Activated CD4-positive, alpha-beta T cell treated with anti-CD3 and anti-CD28 coated beads for 36 hours (primary cell): ENCODE measurements at regions of chr16 and their contacts with region 1.

Region 1: DNA sequence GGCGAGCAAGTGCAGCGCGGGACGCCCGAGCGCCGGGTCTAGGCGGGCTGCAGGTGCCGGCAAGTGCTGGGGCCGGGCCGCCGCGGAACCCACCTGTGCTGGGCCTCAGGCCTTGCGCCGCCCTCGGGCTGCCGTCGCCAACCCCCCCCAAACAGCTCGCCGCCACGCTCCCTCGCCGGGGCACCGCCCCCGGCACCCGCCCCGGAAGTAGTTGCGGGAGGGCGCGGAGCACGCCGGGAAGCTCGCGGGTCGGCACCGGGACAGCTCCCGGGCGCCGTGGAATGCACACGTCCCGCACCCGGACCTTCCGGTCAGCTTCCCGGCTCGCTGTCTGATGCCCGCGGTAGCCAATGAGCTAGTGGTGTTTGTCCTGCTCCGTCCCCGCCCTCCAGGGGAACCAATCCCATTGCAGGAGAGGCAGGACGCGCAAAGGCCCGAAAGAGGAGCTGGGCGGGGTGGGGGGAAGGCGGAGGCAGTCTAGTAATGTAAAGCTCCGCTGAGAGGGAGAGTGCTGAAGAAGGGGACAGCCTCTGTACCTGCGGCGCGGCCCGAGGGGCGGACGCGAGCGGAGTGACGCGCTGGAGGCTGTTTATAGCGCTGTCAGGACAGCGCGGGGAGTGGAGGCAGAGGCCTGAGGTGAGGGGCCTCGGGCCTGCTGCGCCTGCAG is at the starts of genes ANKS3 and DNAAF8:
- DNase-seq: peak; percentile 88
- ATAC-seq: peak; percentile 82
- H3K4me3 Mint-ChIP-seq: peak within 1 kb of the TSS; percentile 86
- H3K27ac Mint-ChIP-seq: peak within 1 kb of the TSS; percentile 58
- H3K4me1 Mint-ChIP-seq: peaks cover 13% of the 10 kb centered on the region
- H3K27me3 Mint-ChIP-seq: no peaks in the 10 kb centered on the region
- total RNA-seq, gene ANKS3: 12.1 to 14.1 TPM
- total RNA-seq, gene DNAAF8: 0.11 to 0.16 TPM

Region 2: DNA sequence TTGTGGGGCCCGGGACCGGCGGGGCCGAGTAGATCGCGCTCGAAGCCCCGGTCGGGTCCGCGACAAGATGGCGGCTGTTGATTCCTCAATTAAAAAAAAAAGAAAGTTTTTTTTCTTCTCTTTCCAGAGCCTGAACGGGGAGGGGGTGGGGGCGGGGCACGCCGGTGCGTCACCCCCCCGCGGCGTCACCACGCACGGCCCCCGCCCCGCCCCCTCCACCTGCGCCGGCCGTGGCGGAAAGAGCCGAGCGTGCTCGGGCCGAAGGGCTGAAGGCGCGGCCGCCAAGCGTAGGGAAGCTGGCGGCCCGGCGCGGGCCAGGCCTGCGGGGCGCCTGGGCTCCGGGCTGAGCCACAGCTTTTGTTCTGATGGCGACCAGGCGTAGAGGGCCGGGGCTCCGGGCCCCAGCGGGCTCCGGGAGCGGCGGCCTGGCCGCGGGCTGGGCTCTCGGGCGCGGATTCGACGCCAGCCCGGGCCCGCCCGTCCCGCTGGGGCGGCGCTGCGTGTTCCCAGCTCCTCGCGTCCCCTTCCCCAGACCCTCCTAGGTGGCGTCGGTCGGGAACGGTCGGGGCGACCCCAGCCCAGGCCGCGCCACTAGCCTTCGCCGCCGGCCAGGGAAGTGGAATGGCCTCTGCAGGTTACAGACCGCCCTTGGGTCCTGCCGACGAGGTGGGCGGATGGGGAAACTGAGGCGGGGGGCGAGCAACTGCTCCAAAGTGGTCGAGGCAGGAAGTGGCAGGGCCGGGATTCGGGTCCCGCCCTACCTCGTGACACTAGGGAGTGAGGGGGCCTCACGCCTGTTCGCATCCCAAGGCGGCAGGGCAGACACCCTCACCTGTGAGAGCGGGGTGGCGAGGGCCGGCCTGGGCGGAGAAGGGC is 853.3 kb before region 1 on chr16 and contains the start of gene CREBBP:
- CTCF ChIA-PET with region 1: no interaction called
- POLR2A ChIA-PET with region 1: no interaction called
- intact Hi-C with region 1: loop called in 1 of 2 experiments (anchors 1 kb)
- DNase-seq: peak; percentile 93
- ATAC-seq: peak; percentile 89
- H3K4me3 Mint-ChIP-seq: peak within 1 kb of the TSS; percentile 79
- H3K27ac Mint-ChIP-seq: peak within 1 kb of the TSS; percentile 69
- H3K4me1 Mint-ChIP-seq: peaks cover 36% of the 10 kb centered on the region
- H3K27me3 Mint-ChIP-seq: peaks cover 6% of the 10 kb centered on the region
- total RNA-seq, gene CREBBP: 28.1 to 37.4 TPM

Region 3: DNA sequence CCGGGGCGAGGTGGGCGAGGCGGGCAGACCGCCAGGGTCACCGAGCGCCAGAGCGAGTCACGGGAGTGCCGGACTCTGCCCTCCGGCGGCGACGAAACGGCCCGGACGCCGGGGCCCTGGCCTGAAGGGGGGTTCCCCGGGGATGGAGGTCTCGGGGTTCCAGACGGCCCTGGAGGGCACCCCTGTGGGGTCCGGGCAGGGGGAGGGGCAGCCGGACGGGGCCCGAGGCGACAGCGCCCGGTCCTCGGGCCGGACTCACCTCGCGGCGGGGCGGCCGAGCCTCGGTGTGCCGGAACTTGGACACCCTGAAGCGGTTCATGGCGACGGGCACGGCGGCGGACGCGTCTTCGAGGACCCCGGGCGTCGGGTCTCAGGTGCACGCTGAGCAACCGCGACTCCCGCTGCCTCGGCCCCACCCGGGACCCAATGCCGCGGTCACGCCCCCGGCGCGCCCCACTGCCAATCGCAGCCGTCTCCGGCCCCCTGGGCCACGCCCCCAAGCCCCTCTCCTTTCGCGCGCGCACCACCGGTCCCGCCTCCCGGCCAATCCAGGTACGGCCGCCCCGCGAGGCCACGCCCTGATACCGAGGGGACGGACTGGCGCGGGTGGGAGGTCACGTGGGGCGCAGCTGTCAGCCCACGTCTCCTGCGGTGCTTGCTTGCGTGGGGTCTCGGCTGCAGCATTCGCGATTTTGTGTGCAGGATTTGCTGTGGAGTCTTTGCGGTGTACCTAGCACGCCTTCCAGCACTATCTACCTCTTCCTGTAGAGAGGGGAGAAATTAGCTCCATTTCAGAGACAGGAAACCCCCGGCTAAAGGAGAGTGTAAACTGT is 317.8 kb before region 1 on chr16 and contains the start of gene CORO7:
- CTCF ChIA-PET with region 1: no interaction called
- POLR2A ChIA-PET with region 1: interaction called, 5 read pairs
- intact Hi-C with region 1: loop called in 1 of 2 experiments (anchors 2 kb)
- DNase-seq: peak; percentile 98
- ATAC-seq: peak; percentile 81
- H3K4me3 Mint-ChIP-seq: peak within 1 kb of the TSS; percentile 86
- H3K27ac Mint-ChIP-seq: peak within 1 kb of the TSS; percentile 84
- H3K4me1 Mint-ChIP-seq: peaks cover 29% of the 10 kb centered on the region
- H3K27me3 Mint-ChIP-seq: no peaks in the 10 kb centered on the region
- total RNA-seq, gene CORO7: 65.0 to 67.1 TPM

Region 4: DNA sequence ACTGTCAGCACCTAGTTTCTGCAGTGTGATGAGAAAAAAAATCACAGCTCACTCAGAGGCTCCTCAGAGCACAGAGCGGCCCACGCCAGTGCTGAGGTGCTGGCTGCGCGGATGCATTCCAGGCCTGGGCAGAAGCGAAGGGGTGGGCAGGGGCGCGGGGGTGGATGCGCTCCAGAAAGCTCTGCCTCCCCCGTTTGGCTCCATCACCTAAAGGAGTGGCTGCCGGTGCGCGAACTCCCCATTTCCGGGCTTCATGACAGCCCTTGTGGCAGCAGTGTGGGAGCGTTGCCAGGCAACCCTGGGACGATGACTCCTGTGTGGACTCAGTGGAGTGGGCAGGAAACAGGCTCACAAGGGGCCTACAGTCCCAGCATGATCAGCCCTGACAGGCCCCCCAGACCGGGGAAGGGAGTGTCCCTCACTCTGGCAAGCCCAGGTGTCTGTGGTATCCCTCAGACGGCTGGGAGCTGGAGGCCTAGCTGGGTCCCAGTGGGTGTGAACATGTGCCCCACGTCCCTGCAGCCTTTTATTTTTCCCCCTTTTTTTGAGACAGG is 73.7 kb before region 1 on chr16:
- CTCF ChIA-PET with region 1: no interaction called
- POLR2A ChIA-PET with region 1: no interaction called
- intact Hi-C with region 1: loop called in 1 of 2 experiments (anchors 2 kb)
- DNase-seq: peak; percentile 94
- ATAC-seq: peak; percentile 82
- H3K4me3 Mint-ChIP-seq: no peak overlapping the region
- H3K27ac Mint-ChIP-seq: peak overlapping the region; percentile 68
- H3K4me1 Mint-ChIP-seq: peaks cover 70% of the 10 kb centered on the region
- H3K27me3 Mint-ChIP-seq: no peaks in the 10 kb centered on the region

Region 5: GRCh38 chr16:4766874-4767628 is 32.9 kb after region 1 on chr16 and contains the start of gene ZNF500:
- CTCF ChIA-PET with region 1: interaction called, 5 read pairs
- POLR2A ChIA-PET with region 1: interaction called, 4 read pairs
- intact Hi-C with region 1: loop called (anchors 1 kb)
- DNase-seq: peak; percentile 97
- ATAC-seq: peak; percentile 78
- H3K4me3 Mint-ChIP-seq: peak within 1 kb of the TSS; percentile 89
- H3K27ac Mint-ChIP-seq: peak within 1 kb of the TSS; percentile 91
- H3K4me1 Mint-ChIP-seq: peaks cover 25% of the 10 kb centered on the region
- H3K27me3 Mint-ChIP-seq: no peaks in the 10 kb centered on the region
- total RNA-seq, gene ZNF500: 10.3 to 11.6 TPM

Region 6: GRCh38 chr16:4846891-4847773 is 112.9 kb after region 1 on chr16 and contains the starts of genes GLYR1 and UBN1:
- CTCF ChIA-PET with region 1: no interaction called
- POLR2A ChIA-PET with region 1: interaction called, 3 read pairs
- intact Hi-C with region 1: loop called in 1 of 2 experiments (anchors 1 kb)
- DNase-seq: peak; percentile 100
- ATAC-seq: peak; percentile 96
- H3K4me3 Mint-ChIP-seq: peak within 1 kb of the TSS; percentile 77
- H3K27ac Mint-ChIP-seq: peak within 1 kb of the TSS; percentile 84
- H3K4me1 Mint-ChIP-seq: peaks cover 54% of the 10 kb centered on the region
- H3K27me3 Mint-ChIP-seq: no peaks in the 10 kb centered on the region
- total RNA-seq, gene GLYR1: 76.9 to 78.4 TPM
- total RNA-seq, gene UBN1: 19.3 to 23.0 TPM

Region 7: DNA sequence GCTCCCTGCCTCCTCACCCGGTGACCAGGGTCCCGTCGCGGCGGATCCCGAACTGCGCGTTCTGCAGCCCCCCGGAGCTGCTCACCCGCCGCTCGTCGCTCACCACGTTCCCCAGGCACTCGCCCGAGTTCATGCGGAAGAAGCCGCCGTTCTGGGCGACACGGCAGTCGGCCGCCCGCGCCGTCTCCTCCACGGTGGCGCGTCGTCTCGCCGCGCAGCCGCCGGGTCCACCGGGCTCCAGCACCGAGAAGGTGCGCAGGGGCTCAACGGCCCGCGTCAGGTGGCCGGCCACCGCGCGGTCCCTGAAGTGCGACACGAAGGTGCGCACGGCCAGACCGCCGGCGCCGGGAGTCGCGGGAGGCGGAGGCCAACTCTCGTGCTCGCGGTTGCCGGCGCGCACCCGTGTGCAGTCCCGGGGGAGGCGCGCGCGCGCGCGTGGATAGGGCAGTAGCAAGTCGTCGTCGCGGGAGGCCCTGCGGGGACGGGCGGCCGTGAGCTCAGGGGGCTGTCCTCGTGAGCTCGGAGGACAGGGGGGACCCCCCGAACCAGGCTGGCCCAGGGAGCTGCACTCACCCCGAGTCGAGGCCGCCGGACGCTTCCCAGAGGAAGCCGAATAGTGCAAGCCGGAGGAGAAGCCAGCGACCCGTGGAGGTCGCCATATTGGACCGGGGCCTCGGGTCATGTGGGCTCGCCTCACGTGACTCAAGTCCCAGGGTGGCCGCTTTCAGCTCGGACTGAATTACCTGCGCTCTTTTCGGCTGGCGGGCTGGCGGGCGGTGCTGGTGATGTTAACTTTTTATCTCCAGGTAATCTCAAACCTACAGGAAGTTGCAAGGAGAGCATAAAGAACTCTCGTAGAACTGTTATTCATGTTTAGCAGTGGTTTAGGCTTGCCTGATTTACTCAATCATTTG is 299.3 kb after region 1 on chr16 and contains the start of gene NAGPA:
- CTCF ChIA-PET with region 1: no interaction called
- POLR2A ChIA-PET with region 1: no interaction called
- intact Hi-C with region 1: loop called in 1 of 2 experiments (anchors 1 kb)
- DNase-seq: peak; percentile 93
- ATAC-seq: peak; percentile 96
- H3K4me3 Mint-ChIP-seq: peak within 1 kb of the TSS; percentile 85
- H3K27ac Mint-ChIP-seq: peak within 1 kb of the TSS; percentile 80
- H3K4me1 Mint-ChIP-seq: peaks cover 19% of the 10 kb centered on the region
- H3K27me3 Mint-ChIP-seq: no peaks in the 10 kb centered on the region
- total RNA-seq, gene NAGPA: 8.9 to 10.2 TPM